ENCODE measurements at regions of chr7 and their contacts with region 1.

Region 1: GRCh38 chr7:143408686-143409561 is at the start of gene EPHA1:
- DNase-seq: peak; percentile 59
- ATAC-seq: peak; percentile 75
- H3K4me3 Mint-ChIP-seq: peak within 1 kb of the TSS; percentile 79
- H3K27ac Mint-ChIP-seq: peak within 1 kb of the TSS; percentile 79
- H3K4me1 Mint-ChIP-seq: peaks cover 53% of the 10 kb centered on the region
- H3K27me3 Mint-ChIP-seq: peaks cover 2% of the 10 kb centered on the region
- total RNA-seq, gene EPHA1: 12.4 to 15.7 TPM

Region 2: DNA sequence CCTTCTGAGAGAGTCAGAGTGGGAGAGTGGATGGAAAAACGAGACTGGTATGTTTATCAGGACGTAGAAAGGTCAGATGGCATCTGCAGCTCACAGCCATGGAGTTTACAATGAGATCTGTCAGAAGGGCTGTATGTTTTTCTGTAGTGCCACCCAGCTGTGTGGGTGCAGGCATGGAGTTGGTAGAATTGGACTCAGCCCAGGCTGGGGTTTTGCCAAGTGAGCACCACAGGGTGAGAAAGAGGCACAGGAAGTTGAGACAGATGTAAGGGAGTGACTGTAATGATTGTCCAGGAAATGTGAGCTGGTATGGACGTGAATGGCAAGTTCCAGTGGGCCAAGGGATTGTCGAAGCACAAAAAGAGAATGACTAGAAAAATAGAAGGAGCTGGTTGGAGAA is 36.9 kb before region 1 on chr7:
- CTCF ChIA-PET with region 1: interaction called, 8 read pairs
- POLR2A ChIA-PET with region 1: interaction called, 10 read pairs
- DNase-seq: peak; percentile 60
- ATAC-seq: peak; percentile 28
- H3K4me3 Mint-ChIP-seq: no peak overlapping the region
- H3K27ac Mint-ChIP-seq: peak overlapping the region; percentile 75
- H3K4me1 Mint-ChIP-seq: peaks cover 54% of the 10 kb centered on the region
- H3K27me3 Mint-ChIP-seq: no peaks in the 10 kb centered on the region

Region 3: DNA sequence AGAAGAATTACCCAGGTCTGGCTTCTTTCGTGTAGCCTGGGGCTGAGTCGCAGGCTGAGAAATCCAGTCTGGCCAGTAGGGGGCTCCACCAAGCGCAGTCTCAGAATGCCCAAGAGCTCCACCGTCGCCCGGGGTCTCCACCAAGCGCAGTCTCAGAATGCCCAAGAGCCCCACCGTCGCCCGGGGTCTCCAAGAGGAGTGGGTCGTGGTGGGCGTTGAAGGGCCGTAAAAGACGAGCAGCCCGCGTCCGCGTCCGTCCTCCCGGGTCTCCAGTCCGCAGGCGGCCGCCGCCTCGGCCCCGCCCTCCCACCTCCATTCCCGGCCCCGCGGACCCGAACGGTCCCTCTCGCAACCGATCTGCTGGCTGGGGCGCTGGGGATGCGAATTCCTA is 28.7 kb before region 1 on chr7:
- CTCF ChIA-PET with region 1: interaction called, 40 read pairs
- POLR2A ChIA-PET with region 1: interaction called, 18 read pairs
- DNase-seq: peak; percentile 91
- ATAC-seq: peak; percentile 53
- H3K4me3 Mint-ChIP-seq: peak overlapping the region; percentile 80
- H3K27ac Mint-ChIP-seq: peak overlapping the region; percentile 91
- H3K4me1 Mint-ChIP-seq: peaks cover 38% of the 10 kb centered on the region
- H3K27me3 Mint-ChIP-seq: no peaks in the 10 kb centered on the region

Region 4: DNA sequence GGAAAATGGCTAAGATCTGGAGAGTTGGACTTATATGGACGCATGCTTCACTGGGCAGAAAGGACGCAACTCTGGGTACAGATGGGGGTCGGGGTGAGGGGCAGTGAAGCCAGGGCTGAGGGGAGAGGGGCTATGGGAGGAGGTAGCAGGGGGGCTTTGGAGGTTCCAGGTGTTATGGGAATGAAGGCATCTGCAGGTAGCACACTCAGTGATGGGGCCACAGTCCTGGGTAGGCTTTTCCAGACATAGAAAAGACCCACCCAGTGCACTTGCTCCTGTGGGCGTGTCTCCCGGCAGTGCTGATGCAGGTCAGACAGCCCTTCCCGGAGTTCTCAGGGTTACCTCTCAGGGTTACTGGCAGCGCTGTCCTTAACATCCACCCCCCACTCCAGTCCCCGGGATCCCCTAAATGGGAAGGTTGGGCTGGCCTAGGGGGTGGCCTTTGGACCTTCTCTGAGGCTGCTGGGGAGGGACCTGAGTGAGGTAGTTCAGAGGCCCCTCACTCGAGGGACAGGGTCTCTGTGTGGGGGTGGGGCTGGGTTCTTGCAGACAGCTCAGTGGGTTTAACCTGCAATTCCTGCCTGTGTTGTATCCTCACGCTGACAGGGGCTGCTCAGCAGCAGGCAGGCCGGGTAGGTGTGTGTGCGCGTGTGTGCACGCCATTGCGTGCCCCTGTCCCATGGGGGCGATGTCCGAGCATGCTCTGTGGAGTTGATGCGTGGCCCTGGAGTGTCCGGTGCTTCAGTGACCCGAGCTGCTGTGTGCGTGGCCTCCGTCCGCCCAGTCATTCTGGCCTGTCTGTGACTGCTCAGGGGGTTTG is 21.6 kb before region 1 on chr7:
- CTCF ChIA-PET with region 1: interaction called, 12 read pairs
- POLR2A ChIA-PET with region 1: interaction called, 18 read pairs
- DNase-seq: no peak
- ATAC-seq: no peak
- H3K4me3 Mint-ChIP-seq: no peak overlapping the region
- H3K27ac Mint-ChIP-seq: no peak overlapping the region
- H3K4me1 Mint-ChIP-seq: peaks cover 26% of the 10 kb centered on the region
- H3K27me3 Mint-ChIP-seq: no peaks in the 10 kb centered on the region

Region 5: GRCh38 chr7:143447466-143447865 is 38.5 kb after region 1 on chr7:
- CTCF ChIA-PET with region 1: no interaction called
- POLR2A ChIA-PET with region 1: no interaction called
- DNase-seq: no peak
- ATAC-seq: no peak
- H3K4me3 Mint-ChIP-seq: no peak overlapping the region
- H3K27ac Mint-ChIP-seq: no peak overlapping the region
- H3K4me1 Mint-ChIP-seq: no peaks in the 10 kb centered on the region
- H3K27me3 Mint-ChIP-seq: no peaks in the 10 kb centered on the region

Region 6: GRCh38 chr7:143458263-143458662 is 49.3 kb after region 1 on chr7:
- CTCF ChIA-PET with region 1: no interaction called
- POLR2A ChIA-PET with region 1: no interaction called
- DNase-seq: no peak
- ATAC-seq: no peak
- H3K4me3 Mint-ChIP-seq: no peak overlapping the region
- H3K27ac Mint-ChIP-seq: no peak overlapping the region
- H3K4me1 Mint-ChIP-seq: no peaks in the 10 kb centered on the region
- H3K27me3 Mint-ChIP-seq: no peaks in the 10 kb centered on the region

Measured in activated CD8-positive, alpha-beta T cell treated with anti-CD3 and anti-CD28 coated beads, Interleukin-2, amount 10 ng/mL, durations not matched to agents 7 days and 5 days (primary cell).